Activated B cell treated with CpG ODN at 0.5 μM for 24 hours (primary cell): ENCODE measurements at regions of chr1 and their contacts with region 1.

Region 1: DNA sequence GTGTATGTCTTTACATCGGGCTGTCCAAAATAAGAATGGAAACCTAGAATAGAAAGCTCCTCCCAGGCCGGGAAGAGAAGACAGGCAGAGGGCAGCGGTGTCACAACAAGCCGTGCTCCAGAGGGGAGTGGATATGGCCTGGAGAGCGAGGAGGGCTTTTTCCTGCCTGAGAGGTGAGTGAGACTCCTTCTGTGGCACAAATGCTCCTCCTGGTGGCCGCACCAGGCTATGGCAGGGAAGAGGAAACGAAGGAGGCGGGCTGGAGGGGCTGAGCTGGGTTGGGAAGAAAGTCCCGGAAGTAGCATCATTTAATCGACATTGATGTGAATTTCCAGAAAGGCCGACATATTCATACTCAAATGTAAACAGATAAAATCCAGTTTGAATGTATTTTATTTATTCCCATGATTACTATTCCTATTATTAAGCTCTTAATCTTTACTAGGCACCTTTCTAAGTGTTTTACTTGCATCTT is 54.7 kb downstream of the MEF2D start:
- DNase-seq: peak; percentile 72
- ATAC-seq: peak; percentile 90
- H3K4me3 Mint-ChIP-seq: no peak overlapping the region
- H3K27ac Mint-ChIP-seq: no peak overlapping the region
- H3K4me1 Mint-ChIP-seq: peaks cover 6% of the 10 kb centered on the region
- H3K27me3 Mint-ChIP-seq: peaks cover 58% of the 10 kb centered on the region
- CTCF ChIP-seq: peak; percentile 98

Region 2: GRCh38 chr1:156356875-156357534 is 88.8 kb before region 1 on chr1:
- CTCF ChIA-PET with region 1: interaction called, 11 read pairs
- POLR2A ChIA-PET with region 1: no interaction called
- intact Hi-C with region 1: loop called (anchors 1 kb)
- DNase-seq: peak; percentile 71
- ATAC-seq: peak; percentile 100
- H3K4me3 Mint-ChIP-seq: no peak overlapping the region
- H3K27ac Mint-ChIP-seq: no peak overlapping the region
- H3K4me1 Mint-ChIP-seq: peaks cover 4% of the 10 kb centered on the region
- H3K27me3 Mint-ChIP-seq: peaks cover 31% of the 10 kb centered on the region
- CTCF ChIP-seq: peak; percentile 94

Region 3: GRCh38 chr1:156421062-156421938 is 24.5 kb before region 1 on chr1:
- CTCF ChIA-PET with region 1: interaction called, 16 read pairs
- POLR2A ChIA-PET with region 1: no interaction called
- intact Hi-C with region 1: no loop called
- DNase-seq: peak; percentile 50
- ATAC-seq: peak; percentile 73
- H3K4me3 Mint-ChIP-seq: peak overlapping the region; percentile 89
- H3K27ac Mint-ChIP-seq: no peak overlapping the region
- H3K4me1 Mint-ChIP-seq: peaks cover 23% of the 10 kb centered on the region
- H3K27me3 Mint-ChIP-seq: peaks cover 74% of the 10 kb centered on the region
- CTCF ChIP-seq: no peak

Region 4: GRCh38 chr1:156608036-156608674 is 162.3 kb after region 1 on chr1:
- CTCF ChIA-PET with region 1: interaction called, 19 read pairs
- POLR2A ChIA-PET with region 1: interaction called, 4 read pairs
- intact Hi-C with region 1: no loop called
- DNase-seq: no peak
- ATAC-seq: peak; percentile 78
- H3K4me3 Mint-ChIP-seq: peak overlapping the region; percentile 55
- H3K27ac Mint-ChIP-seq: peak overlapping the region; percentile 73
- H3K4me1 Mint-ChIP-seq: peaks cover 27% of the 10 kb centered on the region
- H3K27me3 Mint-ChIP-seq: peaks cover 5% of the 10 kb centered on the region
- CTCF ChIP-seq: peak; percentile 45

Region 5: GRCh38 chr1:156638189-156638985 is 192.6 kb after region 1 on chr1:
- CTCF ChIA-PET with region 1: no interaction called
- POLR2A ChIA-PET with region 1: no interaction called
- intact Hi-C with region 1: no loop called
- DNase-seq: no peak
- ATAC-seq: no peak
- H3K4me3 Mint-ChIP-seq: no peak overlapping the region
- H3K27ac Mint-ChIP-seq: no peak overlapping the region
- H3K4me1 Mint-ChIP-seq: peaks cover 15% of the 10 kb centered on the region
- H3K27me3 Mint-ChIP-seq: peaks cover 66% of the 10 kb centered on the region
- CTCF ChIP-seq: no peak